Naive thymus-derived CD4-positive, alpha-beta T cell (primary cell): ENCODE measurements at regions of chr14 and their contacts with region 1.

Region 1: GRCh38 chr14:99192028-99192621 is 79.9 kb downstream of the BCL11B start:
- DNase-seq: peak in 3 of 9 donors; percentile 45 to 64 (median 49)
- ATAC-seq: peak; percentile 28
- H3K4me3 ChIP-seq: peak overlapping the region; percentile 61
- H3K4me3 Mint-ChIP-seq: peak overlapping the region; percentile 85 to 94 (median 90)
- H3K27ac ChIP-seq: peak overlapping the region; percentile 85
- H3K27ac Mint-ChIP-seq: peak overlapping the region; percentile 93 to 100 (median 98)
- H3K4me1 ChIP-seq: peaks cover 84 to 85% of the 10 kb centered on the region in 2 donors
- H3K4me1 Mint-ChIP-seq: peaks cover 55 to 97% (median 93%) of the 10 kb centered on the region in 7 donors
- H3K27me3 ChIP-seq: no peaks in the 10 kb centered on the region
- H3K27me3 Mint-ChIP-seq: no peaks in the 10 kb centered on the region

Region 2: DNA sequence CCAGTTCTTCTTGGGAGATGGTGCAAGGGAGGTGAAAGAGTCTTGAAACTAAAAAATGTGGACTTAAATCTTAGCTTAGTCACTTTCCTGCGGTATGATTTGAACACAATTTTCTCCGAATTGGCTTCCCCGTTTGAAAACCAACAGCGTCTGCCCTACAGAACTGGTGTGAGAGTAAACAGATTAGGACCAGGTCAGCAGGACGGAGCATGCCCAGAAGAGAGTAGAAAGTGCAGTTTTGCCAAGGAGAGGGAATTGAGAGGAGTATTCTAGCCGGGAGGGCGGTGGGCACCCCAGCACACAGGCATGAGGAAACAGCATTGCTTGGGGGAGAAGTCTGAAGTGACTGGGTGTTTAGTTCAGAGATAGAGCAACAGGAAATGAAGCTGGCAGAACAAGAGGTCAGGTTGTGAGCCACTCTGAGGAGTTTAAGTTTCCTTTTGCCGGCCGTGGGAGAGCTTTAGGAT is 1467.8 kb before region 1 on chr14:
- CTCF ChIA-PET with region 1: no interaction called
- POLR2A ChIA-PET with region 1: no interaction called
- intact Hi-C with region 1: loop called in 1 of 2 experiments (anchors 2 kb)
- DNase-seq: peak in 8 of 9 donors; percentile 38 to 67 (median 59)
- ATAC-seq: peak; percentile 77
- H3K4me3 ChIP-seq: peak overlapping the region; percentile 57
- H3K4me3 Mint-ChIP-seq: peak overlapping the region; percentile 78 to 92 (median 84)
- H3K27ac ChIP-seq: peak overlapping the region; percentile 80
- H3K27ac Mint-ChIP-seq: peak overlapping the region; percentile 92 to 99 (median 97)
- H3K4me1 ChIP-seq: peaks cover 28 to 72% of the 10 kb centered on the region in 2 donors
- H3K4me1 Mint-ChIP-seq: peaks cover 51 to 94% (median 86%) of the 10 kb centered on the region in 7 donors
- H3K27me3 ChIP-seq: no peaks in the 10 kb centered on the region
- H3K27me3 Mint-ChIP-seq: no peaks in the 10 kb centered on the region

Region 3: GRCh38 chr14:98189062-98189461 is 1003.1 kb before region 1 on chr14:
- CTCF ChIA-PET with region 1: interaction called, 4 read pairs
- POLR2A ChIA-PET with region 1: interaction called, 5 read pairs
- intact Hi-C with region 1: loop called in 1 of 2 experiments (anchors 2 kb)
- DNase-seq: peak in 1 of 9 donors; percentile 50
- ATAC-seq: peak; percentile 40
- H3K4me3 ChIP-seq: peak overlapping the region; percentile 48
- H3K4me3 Mint-ChIP-seq: peak overlapping the region; percentile 63 to 86 (median 76)
- H3K27ac ChIP-seq: peak overlapping the region; percentile 80
- H3K27ac Mint-ChIP-seq: peak overlapping the region; percentile 92 to 100 (median 98)
- H3K4me1 ChIP-seq: peaks cover 82 to 95% of the 10 kb centered on the region in 2 donors
- H3K4me1 Mint-ChIP-seq: peaks cover 56 to 100% (median 98%) of the 10 kb centered on the region in 7 donors
- H3K27me3 ChIP-seq: no peaks in the 10 kb centered on the region
- H3K27me3 Mint-ChIP-seq: no peaks in the 10 kb centered on the region

Region 4: GRCh38 chr14:98931911-98932310 is 260.2 kb before region 1 on chr14:
- CTCF ChIA-PET with region 1: interaction called, 3 read pairs
- POLR2A ChIA-PET with region 1: interaction called, 4 read pairs
- intact Hi-C with region 1: loop called in 1 of 2 experiments (anchors 2 kb)
- DNase-seq: peak; percentile 31 to 90 (median 88)
- ATAC-seq: peak; percentile 97
- H3K4me3 ChIP-seq: peak overlapping the region; percentile 40
- H3K4me3 Mint-ChIP-seq: peak overlapping the region; percentile 66 to 92 (median 80)
- H3K27ac ChIP-seq: peak overlapping the region; percentile 66
- H3K27ac Mint-ChIP-seq: peak overlapping the region; percentile 82 to 98 (median 94)
- H3K4me1 ChIP-seq: peaks cover 31 to 76% of the 10 kb centered on the region in 2 donors
- H3K4me1 Mint-ChIP-seq: peaks cover 51 to 100% (median 99%) of the 10 kb centered on the region in 7 donors
- H3K27me3 ChIP-seq: no peaks in the 10 kb centered on the region
- H3K27me3 Mint-ChIP-seq: peaks cover 0 to 2% (median 0%) of the 10 kb centered on the region in 5 donors

Region 5: DNA sequence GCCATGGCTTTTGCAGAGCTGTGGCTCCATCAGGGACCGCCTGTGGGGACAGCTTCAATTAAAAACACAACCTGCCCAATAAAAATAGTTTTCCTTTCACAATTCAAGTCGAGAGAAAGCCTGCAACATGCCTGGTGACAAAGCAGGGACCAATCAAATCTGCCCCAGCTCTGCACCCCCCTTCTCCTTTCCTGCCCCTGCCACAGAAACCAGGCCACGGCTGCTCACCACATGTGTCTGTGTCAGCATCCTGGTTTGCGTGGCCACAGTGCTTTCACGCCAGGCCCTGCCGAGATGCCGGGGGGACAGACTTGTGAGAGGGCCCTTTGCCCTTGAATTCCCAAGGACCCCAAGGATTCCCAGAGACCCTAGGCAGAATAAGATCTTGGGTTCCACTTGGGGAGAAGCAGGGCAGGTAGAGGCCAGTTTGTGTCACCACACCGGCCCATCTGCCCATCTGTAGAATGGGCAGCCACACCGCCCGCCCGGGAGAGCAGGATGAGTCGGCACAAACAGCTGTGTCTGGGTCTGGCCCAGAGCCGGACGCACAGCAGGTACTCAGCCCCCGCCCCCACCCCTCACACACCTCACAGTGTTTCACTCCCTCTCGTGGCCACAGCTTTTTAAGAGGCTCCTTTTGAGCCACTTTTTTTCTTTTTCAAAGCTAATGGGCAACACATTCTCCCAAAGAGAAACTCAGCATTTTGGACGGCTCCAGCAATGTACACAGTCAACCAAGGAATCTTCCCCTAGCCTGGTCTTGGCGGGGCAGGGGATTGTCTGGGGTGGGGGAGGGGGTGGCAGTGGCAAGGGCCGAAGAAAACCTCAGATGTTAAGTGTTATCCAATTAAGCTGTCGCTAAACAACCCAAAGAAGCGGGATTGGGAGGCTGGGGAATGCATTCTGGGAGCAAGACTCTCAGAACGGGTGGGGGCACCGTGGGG is 38.4 kb after region 1 on chr14:
- CTCF ChIA-PET with region 1: interaction called, 10 read pairs
- POLR2A ChIA-PET with region 1: interaction called, 2,458 read pairs
- intact Hi-C with region 1: loop called (anchors 1 to 2 kb)
- DNase-seq: peak; percentile 54 to 91 (median 84)
- ATAC-seq: peak; percentile 82
- H3K4me3 ChIP-seq: peak overlapping the region; percentile 27
- H3K4me3 Mint-ChIP-seq: peak overlapping the region; percentile 79 to 94 (median 86)
- H3K27ac ChIP-seq: peak overlapping the region; percentile 98
- H3K27ac Mint-ChIP-seq: peak overlapping the region; percentile 94 to 100 (median 99)
- H3K4me1 ChIP-seq: peaks cover 94 to 96% of the 10 kb centered on the region in 2 donors
- H3K4me1 Mint-ChIP-seq: peaks cover 65 to 96% (median 92%) of the 10 kb centered on the region in 7 donors
- H3K27me3 ChIP-seq: no peaks in the 10 kb centered on the region
- H3K27me3 Mint-ChIP-seq: no peaks in the 10 kb centered on the region